ENCODE measurements at regions of chr4 and their contacts with region 1.

Region 1: GRCh38 chr4:118772081-118772766 is 63.7 kb downstream of the SEC24D start:
- DNase-seq: no peak
- ATAC-seq: peak; percentile 68
- H3K4me3 ChIP-seq: no peak overlapping the region
- H3K4me1 ChIP-seq: no peaks in the 10 kb centered on the region
- CTCF ChIP-seq: peak; percentile 23

Region 2: DNA sequence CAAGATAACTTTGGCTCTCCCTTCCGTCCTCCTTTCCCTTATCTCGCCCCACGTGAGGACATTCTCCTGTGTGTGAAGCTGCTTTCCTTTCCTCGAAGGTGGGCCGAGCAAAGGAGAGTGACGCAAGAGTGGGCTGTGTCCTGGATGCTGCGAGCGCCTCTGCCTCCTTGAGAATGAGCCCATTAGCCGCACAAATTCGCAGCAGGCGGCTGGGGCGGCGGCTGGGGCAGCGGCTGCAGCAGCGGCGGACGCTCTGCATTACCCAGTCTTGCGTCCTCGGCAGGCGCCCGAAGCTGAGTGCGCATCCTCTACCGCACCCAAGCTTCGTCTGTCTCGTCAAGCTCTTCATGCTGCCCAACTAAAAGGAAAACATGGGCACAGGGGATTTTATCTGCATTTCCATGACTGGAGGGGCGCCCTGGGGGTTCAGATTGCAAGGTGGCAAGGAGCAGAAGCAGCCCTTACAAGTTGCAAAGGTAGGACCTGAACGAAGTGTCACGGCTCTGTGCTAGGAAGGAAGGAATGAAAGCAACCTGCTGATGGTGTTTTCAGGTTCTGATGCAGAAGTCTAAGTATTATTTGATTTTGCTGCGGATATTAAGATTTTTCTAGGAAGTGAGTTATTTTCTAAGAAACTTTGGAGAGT is 116.6 kb after region 1 on chr4 and contains the start of gene SYNPO2:
- intact Hi-C with region 1: loop called (anchors 5 kb)
- DNase-seq: peak; percentile 47 to 66 (median 63)
- ATAC-seq: peak; percentile 82
- H3K4me3 ChIP-seq: peak within 1 kb of the TSS; percentile 7
- H3K4me1 ChIP-seq: no peaks in the 10 kb centered on the region
- CTCF ChIP-seq: no peak
- total RNA-seq, gene SYNPO2: 18.9 to 804 (median 91.1) TPM

Region 3: GRCh38 chr4:118898684-118899138 is 126.5 kb after region 1 on chr4:
- intact Hi-C with region 1: loop called in 1 of 2 experiments (anchors 5 kb)
- DNase-seq: no peak
- ATAC-seq: no peak
- H3K4me3 ChIP-seq: no peak overlapping the region
- H3K4me1 ChIP-seq: no peaks in the 10 kb centered on the region
- CTCF ChIP-seq: no peak

Region 4: DNA sequence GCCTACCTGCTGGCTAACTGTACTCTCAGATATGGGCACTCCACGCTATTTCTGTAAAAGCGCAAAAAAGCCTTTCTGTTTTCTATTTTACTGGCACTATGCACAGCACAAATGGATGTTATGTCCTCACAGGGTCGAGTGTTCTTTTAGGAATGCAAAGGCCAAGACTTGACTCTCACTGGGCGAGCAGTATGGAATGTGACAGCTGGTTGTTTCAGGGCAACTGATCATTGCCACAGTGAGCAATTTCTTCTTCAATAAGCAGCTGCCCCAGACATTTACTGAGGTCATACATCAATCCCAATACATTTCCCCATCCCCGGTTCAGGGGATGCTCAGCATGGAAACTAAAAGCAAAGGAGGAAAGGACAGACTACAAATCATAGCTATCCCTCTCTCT is 798.2 kb after region 1 on chr4:
- intact Hi-C with region 1: no loop called
- DNase-seq: no peak
- ATAC-seq: no peak
- H3K4me3 ChIP-seq: no peak overlapping the region
- H3K4me1 ChIP-seq: no peaks in the 10 kb centered on the region
- CTCF ChIP-seq: no peak

Measured in mucosa of descending colon (tissue), 3 donors.